CD8-positive, alpha-beta T cell (primary cell): ENCODE measurements at regions of chr22 and their contacts with region 1.

Region 1: GRCh38 chr22:38705235-38706100 is at the start of gene GTPBP1:
- DNase-seq: peak; percentile 91 to 100 (median 95)
- ATAC-seq: peak; percentile 76
- H3K4me3 ChIP-seq: peak within 1 kb of the TSS; percentile 63 to 84
- H3K4me3 Mint-ChIP-seq: peak within 1 kb of the TSS; percentile 93
- H3K27ac ChIP-seq: peak within 1 kb of the TSS; percentile 69 to 77
- H3K27ac Mint-ChIP-seq: peak within 1 kb of the TSS; percentile 95
- H3K4me1 ChIP-seq: peaks cover 47% of the 10 kb centered on the region
- H3K4me1 Mint-ChIP-seq: peaks cover 64% of the 10 kb centered on the region
- H3K27me3 ChIP-seq: no peaks in the 10 kb centered on the region
- H3K27me3 Mint-ChIP-seq: no peaks in the 10 kb centered on the region
- CTCF ChIP-seq: no peak
- total RNA-seq, gene GTPBP1: 341 to 346 TPM

Region 2: DNA sequence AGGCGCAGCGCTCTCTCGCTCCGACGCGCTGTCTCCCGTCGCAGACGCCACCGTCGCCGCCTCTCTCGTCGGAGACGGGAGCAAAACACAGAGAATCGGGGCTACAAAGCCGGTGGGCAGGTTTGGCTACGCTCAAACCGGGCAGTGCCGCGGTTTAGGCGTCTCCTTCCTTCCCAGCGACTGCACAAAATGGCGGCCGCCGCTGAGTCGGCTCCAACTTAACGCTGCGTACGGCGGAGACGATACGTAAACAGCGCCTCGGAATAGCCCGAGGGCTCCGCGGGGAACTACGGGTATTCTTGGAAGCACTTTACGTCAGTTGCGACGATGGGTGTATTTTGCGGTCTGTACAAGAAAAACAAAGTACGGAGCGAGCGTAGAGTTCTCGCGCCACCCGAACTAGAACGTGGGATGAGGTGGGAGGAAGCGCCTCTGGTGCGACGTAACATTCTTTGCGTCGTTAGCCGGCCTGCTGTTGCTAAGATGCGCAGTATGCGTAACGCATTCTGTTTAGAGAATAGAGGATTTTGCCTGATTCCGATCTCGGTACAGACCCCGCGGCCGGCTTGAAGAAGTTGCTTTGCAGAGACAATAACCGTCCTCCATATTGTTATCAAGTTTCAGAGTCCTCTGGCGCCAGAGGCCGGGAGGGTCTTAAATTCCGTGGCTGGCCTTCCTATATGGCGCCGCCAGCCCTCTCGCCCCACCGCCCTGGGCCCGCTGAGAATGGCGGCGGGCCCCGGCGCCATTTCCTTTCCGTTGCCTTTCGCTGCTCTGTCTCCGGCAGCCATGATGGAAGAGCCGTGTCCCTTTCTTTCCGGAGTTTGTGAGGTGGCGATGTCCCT is 199.1 kb before region 1 on chr22 and contains the start of gene DDX17:
- CTCF ChIA-PET with region 1: no interaction called
- POLR2A ChIA-PET with region 1: no interaction called
- intact Hi-C with region 1: loop called (anchors 1 to 2 kb)
- DNase-seq: peak; percentile 91 to 99 (median 95)
- ATAC-seq: peak; percentile 89
- H3K4me3 ChIP-seq: peak within 1 kb of the TSS; percentile 83 to 91
- H3K4me3 Mint-ChIP-seq: peak within 1 kb of the TSS; percentile 98
- H3K27ac ChIP-seq: peak within 1 kb of the TSS; percentile 97 to 99
- H3K27ac Mint-ChIP-seq: peak within 1 kb of the TSS; percentile 100
- H3K4me1 ChIP-seq: peaks cover 38% of the 10 kb centered on the region
- H3K4me1 Mint-ChIP-seq: peaks cover 46% of the 10 kb centered on the region
- H3K27me3 ChIP-seq: no peaks in the 10 kb centered on the region
- H3K27me3 Mint-ChIP-seq: no peaks in the 10 kb centered on the region
- CTCF ChIP-seq: no peak
- total RNA-seq, gene DDX17: 348 to 386 TPM

Region 3: GRCh38 chr22:38681784-38682335 is 23.6 kb before region 1 on chr22 and contains the start of gene TOMM22:
- CTCF ChIA-PET with region 1: interaction called, 5 read pairs
- POLR2A ChIA-PET with region 1: interaction called, 23 read pairs
- intact Hi-C with region 1: loop called in 1 of 2 experiments (anchors 1 kb)
- DNase-seq: peak; percentile 60 to 92 (median 84)
- ATAC-seq: peak; percentile 92
- H3K4me3 ChIP-seq: peak within 1 kb of the TSS; percentile 92 to 95
- H3K4me3 Mint-ChIP-seq: peak within 1 kb of the TSS; percentile 99
- H3K27ac ChIP-seq: peak within 1 kb of the TSS; percentile 84 to 87
- H3K27ac Mint-ChIP-seq: peak within 1 kb of the TSS; percentile 99
- H3K4me1 ChIP-seq: peaks cover 13% of the 10 kb centered on the region
- H3K4me1 Mint-ChIP-seq: peaks cover 19% of the 10 kb centered on the region
- H3K27me3 ChIP-seq: no peaks in the 10 kb centered on the region
- H3K27me3 Mint-ChIP-seq: no peaks in the 10 kb centered on the region
- CTCF ChIP-seq: peak; percentile 37
- total RNA-seq, gene TOMM22: 75.2 to 75.4 TPM

Region 4: GRCh38 chr22:38755911-38756532 is 50.6 kb after region 1 on chr22 and contains the start of gene SUN2:
- CTCF ChIA-PET with region 1: interaction called, 3 read pairs
- POLR2A ChIA-PET with region 1: interaction called, 17 read pairs
- intact Hi-C with region 1: loop called (anchors 1 to 2 kb)
- DNase-seq: peak; percentile 90 to 97 (median 94)
- ATAC-seq: peak; percentile 66
- H3K4me3 ChIP-seq: peak within 1 kb of the TSS; percentile 91 to 96
- H3K4me3 Mint-ChIP-seq: peak within 1 kb of the TSS; percentile 98
- H3K27ac ChIP-seq: peak within 1 kb of the TSS; percentile 65 to 73
- H3K27ac Mint-ChIP-seq: peak within 1 kb of the TSS; percentile 99
- H3K4me1 ChIP-seq: peaks cover 57% of the 10 kb centered on the region
- H3K4me1 Mint-ChIP-seq: peaks cover 58% of the 10 kb centered on the region
- H3K27me3 ChIP-seq: no peaks in the 10 kb centered on the region
- H3K27me3 Mint-ChIP-seq: no peaks in the 10 kb centered on the region
- CTCF ChIP-seq: no peak
- total RNA-seq, gene SUN2: 431 to 454 TPM

Region 5: GRCh38 chr22:38817196-38817595 is 111.7 kb after region 1 on chr22:
- CTCF ChIA-PET with region 1: no interaction called
- POLR2A ChIA-PET with region 1: no interaction called
- intact Hi-C with region 1: no loop called
- DNase-seq: no peak
- ATAC-seq: no peak
- H3K4me3 ChIP-seq: no peak overlapping the region
- H3K4me3 Mint-ChIP-seq: no peak overlapping the region
- H3K27ac ChIP-seq: no peak overlapping the region
- H3K27ac Mint-ChIP-seq: no peak overlapping the region
- H3K4me1 ChIP-seq: no peaks in the 10 kb centered on the region
- H3K4me1 Mint-ChIP-seq: no peaks in the 10 kb centered on the region
- H3K27me3 ChIP-seq: no peaks in the 10 kb centered on the region
- H3K27me3 Mint-ChIP-seq: peaks cover 10% of the 10 kb centered on the region
- CTCF ChIP-seq: no peak

Region 6: GRCh38 chr22:38911434-38911833 is 206.0 kb after region 1 on chr22:
- CTCF ChIA-PET with region 1: no interaction called
- POLR2A ChIA-PET with region 1: no interaction called
- intact Hi-C with region 1: no loop called
- DNase-seq: no peak
- ATAC-seq: no peak
- H3K4me3 ChIP-seq: no peak overlapping the region
- H3K4me3 Mint-ChIP-seq: no peak overlapping the region
- H3K27ac ChIP-seq: no peak overlapping the region
- H3K27ac Mint-ChIP-seq: no peak overlapping the region
- H3K4me1 ChIP-seq: no peaks in the 10 kb centered on the region
- H3K4me1 Mint-ChIP-seq: no peaks in the 10 kb centered on the region
- H3K27me3 ChIP-seq: no peaks in the 10 kb centered on the region
- H3K27me3 Mint-ChIP-seq: peaks cover 35% of the 10 kb centered on the region
- CTCF ChIP-seq: no peak

Region 7: GRCh38 chr22:39152511-39153219 is 447.2 kb after region 1 on chr22 and contains the start of gene CBX7:
- CTCF ChIA-PET with region 1: no interaction called
- POLR2A ChIA-PET with region 1: no interaction called
- intact Hi-C with region 1: loop called in 1 of 2 experiments (anchors 5 kb)
- DNase-seq: peak; percentile 84 to 99 (median 92)
- ATAC-seq: peak; percentile 82
- H3K4me3 ChIP-seq: peak within 1 kb of the TSS; percentile 83 to 89
- H3K4me3 Mint-ChIP-seq: peak within 1 kb of the TSS; percentile 92
- H3K27ac ChIP-seq: peak within 1 kb of the TSS; percentile 86 to 87
- H3K27ac Mint-ChIP-seq: peak within 1 kb of the TSS; percentile 91
- H3K4me1 ChIP-seq: peaks cover 51% of the 10 kb centered on the region
- H3K4me1 Mint-ChIP-seq: peaks cover 42% of the 10 kb centered on the region
- H3K27me3 ChIP-seq: no peaks in the 10 kb centered on the region
- H3K27me3 Mint-ChIP-seq: no peaks in the 10 kb centered on the region
- CTCF ChIP-seq: no peak
- total RNA-seq, gene CBX7: 34.2 to 37.2 TPM